ENCODE measurements at regions of chr1 and their contacts with region 1.

Region 1: GRCh38 chr1:67230539-67230938 is 64.3 kb downstream of the IL23R start:
- DNase-seq: no peak
- ATAC-seq: no peak

Region 2: GRCh38 chr1:67285780-67286488 is 55.4 kb after region 1 on chr1:
- intact Hi-C with region 1: no loop called
- DNase-seq: no peak
- ATAC-seq: no peak

Region 3: DNA sequence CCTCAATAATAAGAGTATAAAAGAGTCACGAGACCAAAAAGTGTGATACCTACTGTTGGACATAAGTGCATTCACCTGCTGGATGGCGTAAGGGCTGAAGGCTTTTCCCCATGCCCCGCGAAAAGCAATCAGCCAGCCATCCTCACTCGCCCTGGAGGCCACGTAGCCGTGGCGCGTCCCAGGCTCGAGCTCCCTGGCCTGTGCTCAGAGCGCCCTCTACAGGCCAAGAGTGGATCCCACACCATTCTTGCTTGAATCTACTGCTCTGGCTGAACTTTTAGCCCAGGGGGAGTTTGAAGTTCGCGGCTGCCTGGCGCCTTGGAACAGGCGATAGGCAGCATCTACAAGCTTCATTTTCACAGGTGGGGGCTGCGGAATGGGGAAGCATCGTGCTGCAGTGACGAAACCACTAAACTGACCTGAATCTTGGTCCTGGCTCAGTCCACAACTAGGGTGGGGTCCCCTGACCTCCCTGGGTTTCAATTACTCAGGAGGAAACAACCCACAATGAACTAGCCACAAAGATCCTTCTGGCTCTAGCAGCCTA is 269.9 kb after region 1 on chr1:
- intact Hi-C with region 1: loop called (anchors 5 kb)
- DNase-seq: peak; percentile 88
- ATAC-seq: peak; percentile 95

Region 4: DNA sequence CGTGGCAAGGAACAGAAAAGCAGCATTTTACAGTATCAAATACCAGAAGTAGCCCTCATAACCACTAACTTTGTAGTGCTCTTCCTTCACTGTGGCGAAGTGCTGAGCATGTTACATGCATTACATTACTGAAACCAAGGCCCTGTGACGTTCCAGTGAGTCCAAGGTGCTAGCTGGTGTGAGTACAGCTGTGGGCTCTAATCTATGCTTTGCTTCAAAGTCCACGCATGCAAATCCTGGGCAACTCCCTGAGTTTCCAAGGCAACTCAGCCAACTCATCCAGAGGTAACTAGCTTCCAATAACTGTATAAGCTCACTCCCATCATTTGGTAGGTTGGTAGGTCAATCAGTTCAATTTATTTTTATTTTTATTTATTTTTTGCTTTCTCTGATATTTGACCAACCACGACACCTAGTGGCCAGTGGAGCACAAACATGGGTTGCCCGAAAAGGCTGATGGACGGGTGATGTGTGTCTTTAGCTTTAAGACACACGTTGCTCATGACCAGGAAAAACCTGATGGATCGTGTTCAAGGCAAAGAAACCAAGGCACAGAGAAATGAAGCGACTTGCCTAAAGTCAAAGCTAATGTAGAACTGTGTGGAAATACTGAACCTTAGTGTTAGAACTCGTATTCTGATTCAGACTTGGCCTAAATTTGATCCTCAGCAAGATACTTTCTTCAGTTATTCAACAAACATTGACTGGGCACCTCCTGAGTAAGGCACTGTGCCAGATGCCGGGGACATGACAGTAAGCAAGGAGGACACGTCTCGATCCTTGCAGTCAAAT is 529.7 kb after region 1 on chr1:
- intact Hi-C with region 1: no loop called
- DNase-seq: peak; percentile 62
- ATAC-seq: peak; percentile 74